Common myeloid progenitor, CD34-positive (primary cell): ENCODE measurements at regions of chr22 and their contacts with region 1.

Region 1: DNA sequence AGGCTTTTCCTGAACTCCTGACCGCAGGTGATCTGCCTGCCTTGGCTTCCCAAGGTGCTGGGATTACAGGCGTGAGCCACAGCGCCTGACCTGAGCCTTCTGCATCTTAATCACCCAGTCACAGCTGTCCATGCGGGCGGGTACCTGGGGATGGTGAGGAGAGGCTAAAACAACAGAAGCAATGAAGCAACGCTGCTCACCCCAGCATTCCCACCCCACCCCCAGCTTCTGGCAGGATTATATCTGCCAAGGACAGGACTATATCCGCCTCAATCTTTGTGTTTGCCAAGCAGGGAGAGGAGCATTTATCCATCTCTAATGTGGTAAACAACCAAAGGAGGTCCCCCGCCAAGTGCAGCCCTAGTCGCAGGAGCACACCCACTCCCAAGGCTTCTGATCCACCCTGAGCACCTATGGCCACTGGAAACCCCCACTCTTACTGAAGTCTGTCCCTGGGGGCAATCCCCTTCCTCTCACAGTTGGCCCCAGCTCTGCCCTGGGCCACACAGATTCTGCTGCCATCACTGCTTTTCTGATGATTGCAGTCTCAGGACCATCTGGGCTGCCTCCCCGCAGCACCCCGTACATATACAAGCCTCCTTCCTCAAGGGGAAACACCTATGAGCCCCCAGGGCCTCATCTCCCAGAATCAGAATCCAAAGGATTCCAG is 8.8 kb upstream of the LGALS2 start:
- DNase-seq: no peak
- H3K4me3 ChIP-seq: no peak overlapping the region
- H3K27ac ChIP-seq: no peak overlapping the region
- H3K4me1 ChIP-seq: peaks cover 0 to 7% (median 3%) of the 10 kb centered on the region in 4 experiments
- H3K27me3 ChIP-seq: peaks cover 0 to 3% (median 0%) of the 10 kb centered on the region in 5 experiments

Region 2: GRCh38 chr22:37538590-37539357 is 49.9 kb before region 1 on chr22:
- CTCF ChIA-PET with region 1: interaction called, 157 read pairs
- POLR2A ChIA-PET with region 1: interaction called, 4 read pairs
- DNase-seq: peak; percentile 91 to 97 (median 96)
- H3K4me3 ChIP-seq: peak overlapping the region in 1 of 7 experiments; percentile 38
- H3K27ac ChIP-seq: no peak overlapping the region
- H3K4me1 ChIP-seq: peaks cover 4 to 40% (median 28%) of the 10 kb centered on the region in 4 experiments
- H3K27me3 ChIP-seq: peaks cover 0 to 16% (median 6%) of the 10 kb centered on the region in 5 experiments

Region 3: GRCh38 chr22:37575490-37576003 is 13.1 kb before region 1 on chr22:
- CTCF ChIA-PET with region 1: interaction called, 22 read pairs
- POLR2A ChIA-PET with region 1: interaction called, 4 read pairs
- DNase-seq: no peak
- H3K4me3 ChIP-seq: no peak overlapping the region
- H3K27ac ChIP-seq: no peak overlapping the region
- H3K4me1 ChIP-seq: peaks cover 2 to 20% (median 17%) of the 10 kb centered on the region in 4 experiments
- H3K27me3 ChIP-seq: no peaks in the 10 kb centered on the region

Region 4: DNA sequence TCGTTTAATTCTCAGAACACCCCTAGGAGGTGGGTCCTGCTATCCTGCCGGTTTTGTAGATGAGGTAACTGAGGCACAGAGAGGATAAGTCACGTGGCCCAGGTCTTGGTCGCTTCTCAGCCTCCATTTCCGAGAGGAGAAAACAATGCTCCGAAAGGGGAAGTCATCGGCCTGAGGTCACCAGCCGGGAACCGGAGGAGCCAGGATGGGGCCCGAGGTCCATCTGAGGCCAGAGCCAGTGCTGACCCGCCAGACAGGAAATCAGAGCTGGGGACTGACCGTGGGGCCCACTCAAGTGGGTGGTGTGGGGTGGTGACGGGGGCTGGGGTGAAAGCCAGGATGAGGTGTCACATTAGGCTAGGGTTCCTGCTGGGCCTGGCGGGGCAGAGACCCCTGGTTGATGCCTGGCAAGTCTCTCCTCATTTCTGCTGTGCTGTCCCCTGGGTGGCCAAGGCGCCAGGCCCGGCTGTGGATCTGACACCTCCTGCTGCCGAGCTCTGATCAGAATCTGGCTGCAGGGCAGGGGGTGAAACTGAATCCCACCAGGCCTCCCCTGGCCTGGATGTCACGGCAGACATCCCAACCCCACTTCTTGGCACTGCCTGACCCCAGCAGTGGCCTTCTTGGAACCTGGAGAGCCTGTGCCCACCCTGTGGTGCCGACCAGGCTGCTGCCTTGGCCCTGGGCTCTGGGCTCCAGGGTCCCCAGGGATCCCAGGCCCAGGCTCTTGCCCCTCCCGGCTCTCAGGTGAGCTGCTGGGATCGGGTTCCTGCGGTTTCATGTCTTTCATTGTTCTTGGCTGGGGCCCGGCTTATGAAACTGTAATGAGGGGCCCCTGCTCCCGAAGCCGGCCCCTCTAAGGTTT is 120.1 kb after region 1 on chr22:
- CTCF ChIA-PET with region 1: no interaction called
- POLR2A ChIA-PET with region 1: no interaction called
- DNase-seq: no peak
- H3K4me3 ChIP-seq: no peak overlapping the region
- H3K27ac ChIP-seq: no peak overlapping the region
- H3K4me1 ChIP-seq: peaks cover 0 to 5% (median 2%) of the 10 kb centered on the region in 4 experiments
- H3K27me3 ChIP-seq: no peaks in the 10 kb centered on the region